ENCODE measurements at regions of chr14 and their contacts with region 1.

Region 1: DNA sequence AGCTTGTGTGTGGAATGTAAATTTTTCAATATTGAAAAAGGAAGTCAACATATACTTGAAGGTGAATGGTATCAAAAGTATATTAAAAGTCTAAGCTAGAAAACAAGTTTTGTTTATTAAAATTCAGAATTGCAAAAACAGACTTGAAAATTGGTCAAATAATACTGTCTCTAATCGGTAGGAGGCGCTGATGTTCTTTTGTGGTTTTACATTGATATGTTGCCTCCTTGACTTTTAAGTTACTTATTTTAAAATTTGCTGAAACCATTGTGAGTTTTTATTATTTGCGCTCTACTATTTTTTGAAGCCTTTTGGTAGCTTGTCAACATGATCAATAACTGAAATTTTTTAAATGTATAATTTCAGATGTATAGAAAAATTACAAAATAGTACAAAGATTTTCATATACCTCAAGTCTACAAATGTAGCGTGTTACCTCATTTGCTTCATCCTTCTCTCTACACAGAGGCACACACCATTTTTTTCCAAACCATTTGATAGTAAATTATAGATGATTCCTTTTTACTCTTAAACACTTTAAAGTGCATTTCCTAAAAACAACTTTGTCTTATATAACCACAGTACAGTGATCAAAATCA is 6.9 kb downstream of the RTRAF start:
- DNase-seq: no peak
- ATAC-seq: no peak
- H3K4me3 ChIP-seq: no peak overlapping the region
- H3K27ac ChIP-seq: no peak overlapping the region
- H3K4me1 ChIP-seq: peaks cover 0 to 57% (median 26%) of the 10 kb centered on the region in 12 donors
- H3K27me3 ChIP-seq: no peaks in the 10 kb centered on the region
- CTCF ChIP-seq: peak; percentile 72 to 94 (median 79)
- POLR2A ChIP-seq: no peak

Region 2: GRCh38 chr14:51963286-51963685 is 33.0 kb before region 1 on chr14:
- intact Hi-C with region 1: no loop called
- DNase-seq: no peak
- ATAC-seq: no peak
- H3K4me3 ChIP-seq: peak overlapping the region in 8 of 12 donors; percentile 6 to 35 (median 11)
- H3K27ac ChIP-seq: peak overlapping the region in 4 of 12 donors; percentile 1 to 34 (median 19)
- H3K4me1 ChIP-seq: peaks cover 0 to 24% (median 4%) of the 10 kb centered on the region in 12 donors
- H3K27me3 ChIP-seq: peaks cover 0 to 3% (median 0%) of the 10 kb centered on the region in 9 donors
- CTCF ChIP-seq: no peak
- POLR2A ChIP-seq: no peak

Region 3: DNA sequence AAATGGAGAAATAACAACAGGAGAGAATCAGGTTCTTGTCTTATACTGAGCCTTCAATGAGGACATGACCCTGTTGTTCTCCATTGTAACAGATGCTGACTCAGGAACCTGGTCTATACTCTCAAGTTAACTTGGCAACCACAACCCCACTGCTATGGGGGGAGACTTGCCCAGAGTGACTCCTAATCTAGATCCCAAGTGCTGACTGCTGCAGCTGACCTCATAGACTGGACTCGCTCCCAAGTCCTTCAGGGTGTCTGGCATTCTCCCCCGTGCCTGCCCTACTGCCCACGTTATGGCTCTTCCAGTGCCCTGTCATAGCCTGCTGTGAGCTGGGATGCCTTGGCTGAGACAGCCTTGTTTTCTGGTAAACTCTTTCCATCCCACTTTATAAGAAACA is 35.5 kb after region 1 on chr14:
- intact Hi-C with region 1: loop called in 1 of 10 experiments (anchors 5 kb)
- DNase-seq: peak; percentile 70 to 93 (median 78)
- ATAC-seq: peak; percentile 96 to 98 (median 96)
- H3K4me3 ChIP-seq: no peak overlapping the region
- H3K27ac ChIP-seq: peak overlapping the region; percentile 21 to 81 (median 66)
- H3K4me1 ChIP-seq: peaks cover 0 to 51% (median 36%) of the 10 kb centered on the region in 12 donors
- H3K27me3 ChIP-seq: no peaks in the 10 kb centered on the region
- CTCF ChIP-seq: no peak
- POLR2A ChIP-seq: no peak

Region 4: DNA sequence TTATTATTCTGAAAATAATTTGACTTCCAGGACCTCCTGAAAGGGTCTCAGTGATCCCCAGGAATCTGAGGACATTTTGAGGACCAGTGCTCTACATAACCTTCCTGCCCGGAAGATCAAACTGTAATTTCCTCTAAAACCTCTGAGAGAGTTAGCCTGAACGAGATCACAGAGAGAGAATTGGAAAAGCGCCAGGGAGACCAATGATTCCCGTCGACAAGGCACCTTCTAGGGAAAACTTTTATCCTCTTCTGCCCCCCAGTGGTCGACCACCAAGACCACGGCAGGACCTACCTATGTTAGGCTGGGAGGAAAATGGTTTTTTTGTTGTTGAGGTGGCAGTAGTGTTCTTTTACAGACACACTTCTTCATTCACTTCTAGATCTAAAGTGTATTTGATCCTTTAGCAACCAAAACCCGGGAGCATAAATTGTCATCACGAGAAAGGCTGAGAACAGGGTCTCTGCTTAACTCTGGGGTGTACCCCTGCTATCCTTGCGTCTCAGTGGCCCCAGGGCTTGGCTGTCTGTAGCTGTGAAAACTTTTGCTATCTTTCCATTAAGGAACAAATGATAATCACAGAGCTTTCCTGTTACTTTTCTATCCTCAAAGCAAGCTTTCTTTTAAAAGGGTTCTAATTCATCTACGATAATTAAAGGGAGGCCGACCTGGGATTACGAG is 135.5 kb after region 1 on chr14:
- intact Hi-C with region 1: loop called (anchors 1 to 5 kb)
- DNase-seq: peak; percentile 63 to 93 (median 83)
- ATAC-seq: peak; percentile 83 to 95 (median 93)
- H3K4me3 ChIP-seq: peak overlapping the region in 2 of 12 donors; percentile 5 to 13
- H3K27ac ChIP-seq: peak overlapping the region in 3 of 12 donors; percentile 23 to 48 (median 47)
- H3K4me1 ChIP-seq: peaks cover 0 to 13% (median 8%) of the 10 kb centered on the region in 12 donors
- H3K27me3 ChIP-seq: no peaks in the 10 kb centered on the region
- CTCF ChIP-seq: peak; percentile 58 to 87 (median 83)
- POLR2A ChIP-seq: no peak

Measured in heart left ventricle (tissue), 16 donors.